Heart right ventricle (tissue), 16 donors: ENCODE measurements at regions of chr17 and their contacts with region 1.

Region 1: GRCh38 chr17:64385187-64386083 is 5.2 kb downstream of the PECAM1 start:
- DNase-seq: peak; percentile 31 to 67
- ATAC-seq: peak; percentile 53 to 89 (median 75)
- H3K4me3 ChIP-seq: peak overlapping the region in 8 of 10 donors; percentile 0 to 58 (median 50)
- H3K27ac ChIP-seq: peak overlapping the region; percentile 54 to 89 (median 85)
- H3K4me1 ChIP-seq: peaks cover 7 to 97% (median 56%) of the 10 kb centered on the region in 9 donors
- H3K27me3 ChIP-seq: no peaks in the 10 kb centered on the region
- CTCF ChIP-seq: no peak

Region 2: GRCh38 chr17:64369007-64369893 is 16.2 kb before region 1 on chr17:
- intact Hi-C with region 1: loop called in 1 of 10 experiments (anchors 2 kb)
- DNase-seq: no peak
- ATAC-seq: no peak
- H3K4me3 ChIP-seq: no peak overlapping the region
- H3K27ac ChIP-seq: no peak overlapping the region
- H3K4me1 ChIP-seq: peaks cover 0 to 13% (median 4%) of the 10 kb centered on the region in 9 donors
- H3K27me3 ChIP-seq: no peaks in the 10 kb centered on the region
- CTCF ChIP-seq: no peak